ENCODE measurements at regions of chr12 and their contacts with region 1.

Region 1: DNA sequence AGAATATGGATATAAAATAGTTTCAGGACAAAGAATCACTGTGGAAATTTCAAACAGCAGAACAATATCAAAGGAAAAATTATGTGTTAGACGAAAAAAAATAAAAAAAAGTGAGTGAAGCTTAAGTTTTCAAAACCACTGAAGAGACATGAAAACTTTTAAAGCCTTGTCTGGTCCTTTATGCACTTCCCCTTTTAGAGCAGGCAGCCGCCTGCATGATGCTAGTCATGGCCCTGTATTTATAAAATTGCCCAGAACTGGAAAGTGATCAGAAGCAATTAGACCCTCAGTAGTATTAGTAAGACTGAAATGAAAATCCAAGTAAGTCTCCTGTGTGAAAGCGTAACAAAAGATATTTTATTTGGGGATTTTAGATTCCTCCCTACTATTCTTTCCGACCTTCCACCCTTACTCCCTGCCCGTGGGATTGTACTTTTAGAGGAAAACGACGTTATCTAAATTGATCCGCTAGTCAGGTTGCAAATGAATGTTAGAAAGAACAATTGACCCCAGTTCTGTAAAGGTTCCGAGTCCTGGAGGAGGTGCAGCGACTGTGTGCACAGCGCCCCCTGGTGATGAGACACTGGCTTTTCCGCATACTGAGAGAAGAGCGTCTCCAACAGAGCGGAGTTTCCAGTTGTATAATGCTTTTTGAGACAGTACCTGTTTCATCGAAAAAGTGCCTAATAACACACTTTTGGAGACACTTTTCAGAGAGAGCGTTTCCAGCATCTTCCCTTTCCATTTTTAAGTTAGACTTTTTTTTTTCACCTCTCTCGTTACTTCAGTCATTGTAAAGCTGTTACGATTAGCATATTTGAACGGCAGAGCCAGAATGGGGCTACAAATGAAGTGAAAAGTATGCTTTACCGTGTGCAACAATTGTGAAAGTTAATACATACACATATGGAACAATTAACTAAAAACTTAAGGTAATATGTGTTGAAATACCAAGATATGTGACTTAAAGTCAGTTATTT is 12.4 kb downstream of the MGST1 start:
- DNase-seq: peak; percentile 64 to 75 (median 68)
- ATAC-seq: peak; percentile 83 to 88 (median 87)
- H3K4me3 ChIP-seq: no peak overlapping the region
- H3K27ac ChIP-seq: no peak overlapping the region
- H3K4me1 ChIP-seq: peaks cover 0 to 20% (median 4%) of the 10 kb centered on the region in 4 donors
- H3K27me3 ChIP-seq: no peaks in the 10 kb centered on the region
- CTCF ChIP-seq: peak; percentile 70 to 84 (median 80)
- POLR2A ChIP-seq: no peak

Region 2: GRCh38 chr12:16189849-16190248 is 170.0 kb before region 1 on chr12:
- intact Hi-C with region 1: loop called in 1 of 2 experiments (anchors 10 kb)
- DNase-seq: no peak
- ATAC-seq: peak in 3 of 4 donors; percentile 78 to 83 (median 80)
- H3K4me3 ChIP-seq: no peak overlapping the region
- H3K27ac ChIP-seq: no peak overlapping the region
- H3K4me1 ChIP-seq: no peaks in the 10 kb centered on the region
- H3K27me3 ChIP-seq: no peaks in the 10 kb centered on the region
- CTCF ChIP-seq: peak in 3 of 4 donors; percentile 27 to 49 (median 37)
- POLR2A ChIP-seq: no peak

Region 3: DNA sequence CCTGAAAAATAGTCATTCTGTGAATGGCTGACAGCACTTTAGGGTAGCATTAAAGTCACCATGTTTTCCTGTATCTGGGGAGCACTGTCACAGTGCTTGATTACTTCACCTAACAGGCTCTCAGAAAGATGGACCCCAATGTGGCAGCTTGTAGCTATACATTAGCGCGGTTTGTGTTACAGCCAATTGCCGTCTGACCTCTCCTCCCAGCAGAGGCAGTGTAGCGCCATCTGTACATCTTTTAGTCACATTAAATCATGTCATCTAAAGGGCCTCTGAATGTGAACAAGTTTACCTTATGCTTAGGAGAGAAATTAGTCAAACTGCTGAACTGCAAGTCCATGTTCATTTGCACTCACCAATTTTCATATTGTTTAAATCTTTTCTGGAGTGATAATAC is 132.4 kb after region 1 on chr12:
- intact Hi-C with region 1: no loop called
- DNase-seq: no peak
- ATAC-seq: no peak
- H3K4me3 ChIP-seq: no peak overlapping the region
- H3K27ac ChIP-seq: no peak overlapping the region
- H3K4me1 ChIP-seq: peaks cover 0 to 12% (median 2%) of the 10 kb centered on the region in 4 donors
- H3K27me3 ChIP-seq: no peaks in the 10 kb centered on the region
- CTCF ChIP-seq: no peak
- POLR2A ChIP-seq: no peak